ENCODE measurements at regions of chr3 and their contacts with region 1.

Region 1: DNA sequence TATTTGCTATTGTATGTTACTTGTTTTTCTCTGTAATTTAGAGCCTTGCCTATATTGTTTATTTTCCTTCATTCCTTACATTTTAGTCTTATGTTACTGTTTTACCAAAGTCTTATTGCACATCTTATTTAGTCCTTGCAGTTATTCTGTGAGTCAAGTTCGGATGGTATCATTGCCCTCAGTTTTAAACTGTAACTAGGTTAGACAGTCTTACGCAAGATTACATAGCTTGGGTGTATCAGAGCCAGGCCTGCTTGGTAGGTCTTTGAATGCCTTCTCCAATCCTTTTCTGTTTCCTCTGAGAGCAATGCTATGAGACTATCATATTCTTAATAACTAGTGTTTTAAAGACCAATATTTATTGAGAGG is 57.7 kb upstream of the SAMMSON start:
- DNase-seq: no peak
- H3K4me3 ChIP-seq: no peak overlapping the region
- CTCF ChIP-seq: no peak
- POLR2A ChIP-seq: no peak

Region 2: DNA sequence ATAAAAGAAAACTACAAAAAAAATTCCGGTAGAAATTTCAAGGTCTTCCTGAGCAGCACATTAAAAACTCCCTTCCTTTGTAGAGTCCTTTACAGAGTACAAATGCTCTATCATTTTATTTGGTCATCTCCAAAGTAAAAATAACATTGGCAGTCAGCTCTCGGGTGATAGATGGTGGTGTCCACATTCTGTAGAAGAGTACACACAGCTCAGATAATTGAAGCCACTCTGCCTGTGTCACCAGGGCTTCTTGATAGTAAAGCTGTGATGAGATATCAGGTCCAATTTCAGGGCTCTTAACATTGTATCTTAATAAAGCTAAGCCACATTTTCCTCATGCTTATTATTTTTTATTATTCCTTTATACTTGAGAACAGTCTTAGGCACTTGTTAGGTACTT is 1381.1 kb before region 1 on chr3:
- intact Hi-C with region 1: loop called (anchors 5 kb)
- DNase-seq: no peak
- H3K4me3 ChIP-seq: no peak overlapping the region
- CTCF ChIP-seq: no peak
- POLR2A ChIP-seq: no peak